Activated CD8-positive, alpha-beta T cell treated with anti-CD3 and anti-CD28 coated beads for 36 hours (primary cell): ENCODE measurements at regions of chr14 and their contacts with region 1.

Region 1: GRCh38 chr14:69493791-69494190 is 9.3 kb downstream of the PLEKHD1 start:
- DNase-seq: no peak
- ATAC-seq: no peak
- H3K4me3 Mint-ChIP-seq: no peak overlapping the region
- H3K27ac Mint-ChIP-seq: no peak overlapping the region
- H3K4me1 Mint-ChIP-seq: no peaks in the 10 kb centered on the region
- H3K27me3 Mint-ChIP-seq: no peaks in the 10 kb centered on the region
- CTCF ChIP-seq: no peak

Region 2: DNA sequence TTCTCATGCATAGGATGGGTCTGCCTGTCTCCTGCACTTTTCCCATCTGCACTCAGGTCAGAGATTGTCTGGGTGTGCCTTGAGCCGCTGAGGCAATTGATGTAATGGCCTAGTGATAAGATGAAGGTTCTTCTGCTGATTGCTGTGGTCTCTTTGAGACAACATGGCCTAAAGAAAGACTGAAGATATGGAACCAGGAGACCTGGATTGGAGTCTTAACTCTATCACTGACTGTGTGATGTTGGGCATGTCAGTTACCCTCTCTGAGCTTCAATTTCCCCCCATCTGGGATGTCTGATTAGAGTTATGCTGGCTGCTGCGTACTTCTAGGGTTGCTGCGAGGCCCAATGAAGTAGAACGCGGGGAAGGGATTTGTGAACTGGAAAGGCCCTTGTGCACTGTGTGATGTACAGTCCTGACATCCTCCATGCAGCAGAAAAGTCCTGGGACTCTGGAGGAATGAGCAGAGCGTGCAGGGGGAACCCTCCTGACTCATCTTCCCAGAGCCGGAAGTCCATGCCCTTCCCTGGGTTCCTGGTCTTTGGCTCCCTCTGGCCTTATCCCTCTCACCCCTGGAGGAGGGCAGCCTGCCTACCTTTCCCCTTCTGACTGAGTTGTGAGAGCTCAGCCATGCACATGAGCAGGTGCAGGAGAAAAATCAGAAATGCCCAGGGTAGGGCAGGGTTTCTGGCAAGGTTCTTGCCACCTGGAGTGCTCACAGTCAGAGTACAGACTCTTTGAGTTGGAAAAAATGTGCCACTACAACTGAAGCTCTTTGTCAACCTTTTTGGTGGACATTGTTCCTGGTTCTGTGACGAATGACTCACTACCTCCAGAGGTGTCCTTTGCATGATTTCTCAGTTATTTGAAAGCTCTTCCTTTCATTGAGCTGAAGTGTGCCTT is 11.8 kb after region 1 on chr14:
- CTCF ChIA-PET with region 1: interaction called, 14 read pairs
- POLR2A ChIA-PET with region 1: no interaction called
- intact Hi-C with region 1: no loop called
- DNase-seq: no peak
- ATAC-seq: no peak
- H3K4me3 Mint-ChIP-seq: no peak overlapping the region
- H3K27ac Mint-ChIP-seq: no peak overlapping the region
- H3K4me1 Mint-ChIP-seq: no peaks in the 10 kb centered on the region
- H3K27me3 Mint-ChIP-seq: no peaks in the 10 kb centered on the region
- CTCF ChIP-seq: no peak

Region 3: DNA sequence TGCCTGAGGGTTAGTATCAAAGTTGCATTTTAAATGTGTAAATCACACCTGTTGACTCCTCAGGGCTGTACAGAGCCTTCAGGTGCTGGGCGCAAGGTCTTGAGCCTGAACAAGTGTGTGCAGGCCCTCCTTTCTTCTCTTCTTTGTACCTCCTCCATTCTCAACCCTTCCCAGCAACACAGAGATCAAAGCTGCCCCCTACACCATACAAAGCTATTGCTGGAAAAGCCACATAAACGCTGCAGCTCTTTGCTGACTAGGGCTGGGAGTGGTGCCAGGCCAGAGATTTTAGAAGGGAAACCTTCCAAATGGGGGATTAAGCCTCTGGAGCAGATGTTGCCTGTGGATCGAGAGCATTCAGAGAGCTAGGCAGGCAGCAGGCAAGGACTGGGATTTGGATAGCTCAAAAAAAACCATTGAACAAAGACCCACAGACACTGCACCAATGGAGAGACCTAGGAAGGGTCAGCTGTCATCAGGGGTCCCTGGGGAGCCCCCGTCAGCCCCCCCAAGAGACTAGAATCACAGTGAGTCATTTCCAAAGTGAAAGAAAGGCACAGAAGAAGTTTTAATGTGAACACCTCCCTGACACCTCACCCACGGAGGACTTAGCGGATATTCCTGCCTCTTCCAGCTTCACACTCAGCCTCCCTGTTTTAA is 99.4 kb after region 1 on chr14:
- CTCF ChIA-PET with region 1: no interaction called
- POLR2A ChIA-PET with region 1: no interaction called
- intact Hi-C with region 1: no loop called
- DNase-seq: no peak
- ATAC-seq: no peak
- H3K4me3 Mint-ChIP-seq: no peak overlapping the region
- H3K27ac Mint-ChIP-seq: no peak overlapping the region
- H3K4me1 Mint-ChIP-seq: no peaks in the 10 kb centered on the region
- H3K27me3 Mint-ChIP-seq: no peaks in the 10 kb centered on the region
- CTCF ChIP-seq: no peak